RWPE1 (cell line): ENCODE measurements at regions of chr10 and their contacts with region 1.

Region 1: DNA sequence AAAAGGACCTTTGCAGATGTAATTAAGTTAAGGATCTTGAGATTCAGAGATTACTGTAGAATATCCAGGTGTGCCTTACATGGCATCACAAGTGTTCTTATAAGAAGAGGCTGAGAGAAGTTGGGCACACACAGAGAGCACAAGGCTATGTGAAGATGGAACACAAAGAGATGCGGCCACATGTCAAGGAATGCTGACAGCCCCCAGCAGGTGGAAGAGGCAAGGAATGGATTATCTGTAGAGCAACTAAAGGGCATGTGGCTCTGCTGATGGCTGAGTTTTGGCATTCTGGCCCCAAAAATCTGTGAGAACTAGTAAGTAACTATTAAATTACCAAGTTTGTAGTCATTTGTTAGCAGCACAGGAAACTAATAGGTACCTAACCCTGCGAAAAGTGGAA is 640.7 kb upstream of the PCDH15 start:
- DNase-seq: no peak
- H3K27ac ChIP-seq: no peak overlapping the region
- CTCF ChIP-seq: no peak

Region 2: GRCh38 chr10:55287346-55287745 is 154.4 kb before region 1 on chr10:
- CTCF ChIA-PET with region 1: no interaction called
- POLR2A ChIA-PET with region 1: no interaction called
- DNase-seq: no peak
- H3K27ac ChIP-seq: no peak overlapping the region
- CTCF ChIP-seq: no peak

Region 3: DNA sequence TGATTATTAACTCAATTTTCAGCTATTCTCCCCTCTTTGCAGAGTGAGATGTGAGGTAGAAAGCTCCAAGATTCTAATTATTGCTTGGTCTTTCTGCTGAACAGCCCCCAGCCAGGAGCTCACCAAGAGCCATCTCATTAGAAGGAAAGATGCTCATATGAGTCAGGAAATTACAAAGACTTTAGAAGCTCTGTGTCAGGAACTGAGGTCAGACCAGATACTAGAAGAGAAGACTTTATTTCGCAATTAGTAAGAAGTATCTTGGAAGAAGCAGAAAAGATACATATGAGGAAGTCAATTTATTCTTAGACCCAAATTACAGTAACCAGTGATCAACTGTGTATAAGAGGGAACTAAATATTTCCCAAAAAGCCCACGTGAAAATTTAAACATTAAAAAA is 292.3 kb after region 1 on chr10:
- CTCF ChIA-PET with region 1: no interaction called
- POLR2A ChIA-PET with region 1: interaction called, 10 read pairs
- DNase-seq: no peak
- H3K27ac ChIP-seq: no peak overlapping the region
- CTCF ChIP-seq: no peak